ENCODE measurements at regions of chr7 and their contacts with region 1.

Region 1: DNA sequence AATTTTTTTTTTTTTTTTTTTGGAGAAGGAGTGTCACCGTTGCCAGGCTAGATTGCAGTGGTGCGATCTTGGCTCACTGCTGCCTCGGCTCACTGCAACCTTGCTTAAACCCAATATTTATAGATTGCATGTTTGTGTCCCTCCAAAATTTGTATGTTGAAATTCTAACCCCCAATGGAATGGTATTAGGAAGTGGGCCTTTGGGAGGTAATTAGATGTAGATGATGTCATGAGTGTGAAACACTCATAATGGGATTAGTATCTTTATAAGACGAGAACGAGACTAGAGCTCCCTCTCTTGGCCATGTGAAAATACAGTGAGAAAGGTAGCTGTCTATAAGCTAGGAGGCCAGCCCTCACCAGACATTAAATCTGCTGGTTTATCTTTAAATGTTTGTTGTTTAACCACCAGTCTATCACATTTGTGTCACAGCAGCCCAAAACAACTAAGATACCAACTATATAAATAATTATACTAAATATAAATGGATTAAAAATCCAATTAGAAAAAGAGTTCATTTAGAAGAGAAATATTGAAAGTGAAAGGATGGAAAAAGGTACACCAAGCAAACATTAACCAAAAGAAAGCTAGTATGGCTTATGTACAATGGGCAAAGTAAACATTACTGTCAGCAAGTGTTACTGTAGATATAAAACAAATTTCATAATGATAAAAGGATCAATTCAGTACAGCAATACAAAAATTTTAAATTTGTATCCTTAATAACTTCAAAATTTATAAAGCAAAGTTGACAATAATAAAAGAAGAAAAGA is 9.3 kb downstream of the TCAF1 start:
- DNase-seq: peak; percentile 27
- H3K4me3 Mint-ChIP-seq: no peak overlapping the region
- H3K27ac Mint-ChIP-seq: no peak overlapping the region
- H3K4me1 Mint-ChIP-seq: peaks cover 14% of the 10 kb centered on the region
- H3K27me3 Mint-ChIP-seq: peaks cover 3% of the 10 kb centered on the region

Region 2: GRCh38 chr7:143735962-143736361 is 156.8 kb before region 1 on chr7:
- CTCF ChIA-PET with region 1: interaction called, 13 read pairs
- POLR2A ChIA-PET with region 1: no interaction called
- DNase-seq: no peak
- H3K4me3 Mint-ChIP-seq: no peak overlapping the region
- H3K27ac Mint-ChIP-seq: no peak overlapping the region
- H3K4me1 Mint-ChIP-seq: peaks cover 15% of the 10 kb centered on the region
- H3K27me3 Mint-ChIP-seq: no peaks in the 10 kb centered on the region

Region 3: DNA sequence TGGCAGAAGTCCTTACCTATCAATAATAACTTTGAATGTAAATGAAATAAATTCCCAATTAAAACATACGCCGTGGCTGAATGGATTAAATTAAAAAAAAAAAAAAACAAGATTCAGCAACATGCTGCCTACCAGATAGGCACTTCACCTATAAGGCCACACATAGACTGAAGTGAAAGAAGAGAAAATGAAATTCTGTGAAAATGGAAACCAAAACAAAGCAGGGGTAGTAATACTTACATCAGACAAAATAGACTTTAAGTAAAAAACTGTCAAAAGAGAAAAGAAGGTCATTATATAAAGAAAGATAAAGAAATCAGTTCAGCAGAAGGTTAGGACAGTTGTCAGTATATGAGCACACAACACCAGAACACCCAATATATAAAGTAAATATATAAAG is 46.0 kb before region 1 on chr7:
- CTCF ChIA-PET with region 1: no interaction called
- POLR2A ChIA-PET with region 1: no interaction called
- DNase-seq: no peak
- H3K4me3 Mint-ChIP-seq: no peak overlapping the region
- H3K27ac Mint-ChIP-seq: no peak overlapping the region
- H3K4me1 Mint-ChIP-seq: no peaks in the 10 kb centered on the region
- H3K27me3 Mint-ChIP-seq: no peaks in the 10 kb centered on the region

Region 4: GRCh38 chr7:143953421-143953820 is 60.7 kb after region 1 on chr7:
- CTCF ChIA-PET with region 1: no interaction called
- POLR2A ChIA-PET with region 1: no interaction called
- DNase-seq: no peak
- H3K4me3 Mint-ChIP-seq: no peak overlapping the region
- H3K27ac Mint-ChIP-seq: no peak overlapping the region
- H3K4me1 Mint-ChIP-seq: no peaks in the 10 kb centered on the region
- H3K27me3 Mint-ChIP-seq: peaks cover 23% of the 10 kb centered on the region